ENCODE measurements at regions of chr5 and their contacts with region 1.

Region 1: GRCh38 chr5:39547553-39548154 is 122.9 kb upstream of the DAB2 start:
- DNase-seq: no peak
- H3K4me3 ChIP-seq: no peak overlapping the region
- H3K27me3 ChIP-seq: no peaks in the 10 kb centered on the region
- CTCF ChIP-seq: peak; percentile 67

Region 2: GRCh38 chr5:39370555-39371366 is 176.9 kb before region 1 on chr5:
- CTCF ChIA-PET with region 1: interaction called, 64 read pairs
- POLR2A ChIA-PET with region 1: no interaction called
- DNase-seq: no peak
- H3K4me3 ChIP-seq: no peak overlapping the region
- H3K27me3 ChIP-seq: no peaks in the 10 kb centered on the region
- CTCF ChIP-seq: no peak

Region 3: GRCh38 chr5:39399135-39400036 is 148.3 kb before region 1 on chr5:
- CTCF ChIA-PET with region 1: interaction called, 15 read pairs
- POLR2A ChIA-PET with region 1: interaction called, 3 read pairs
- DNase-seq: peak; percentile 96
- H3K4me3 ChIP-seq: no peak overlapping the region
- H3K27me3 ChIP-seq: no peaks in the 10 kb centered on the region
- CTCF ChIP-seq: no peak

Measured in BJ (cell line).